ENCODE measurements at regions of chr7 and their contacts with region 1.

Region 1: GRCh38 chr7:154853744-154854129 is 149.2 kb downstream of the PAXIP1 start:
- DNase-seq: no peak
- ATAC-seq: no peak
- H3K4me3 ChIP-seq: no peak overlapping the region
- H3K27ac ChIP-seq: no peak overlapping the region
- H3K4me1 ChIP-seq: no peaks in the 10 kb centered on the region
- H3K27me3 ChIP-seq: no peaks in the 10 kb centered on the region
- CTCF ChIP-seq: no peak

Region 2: DNA sequence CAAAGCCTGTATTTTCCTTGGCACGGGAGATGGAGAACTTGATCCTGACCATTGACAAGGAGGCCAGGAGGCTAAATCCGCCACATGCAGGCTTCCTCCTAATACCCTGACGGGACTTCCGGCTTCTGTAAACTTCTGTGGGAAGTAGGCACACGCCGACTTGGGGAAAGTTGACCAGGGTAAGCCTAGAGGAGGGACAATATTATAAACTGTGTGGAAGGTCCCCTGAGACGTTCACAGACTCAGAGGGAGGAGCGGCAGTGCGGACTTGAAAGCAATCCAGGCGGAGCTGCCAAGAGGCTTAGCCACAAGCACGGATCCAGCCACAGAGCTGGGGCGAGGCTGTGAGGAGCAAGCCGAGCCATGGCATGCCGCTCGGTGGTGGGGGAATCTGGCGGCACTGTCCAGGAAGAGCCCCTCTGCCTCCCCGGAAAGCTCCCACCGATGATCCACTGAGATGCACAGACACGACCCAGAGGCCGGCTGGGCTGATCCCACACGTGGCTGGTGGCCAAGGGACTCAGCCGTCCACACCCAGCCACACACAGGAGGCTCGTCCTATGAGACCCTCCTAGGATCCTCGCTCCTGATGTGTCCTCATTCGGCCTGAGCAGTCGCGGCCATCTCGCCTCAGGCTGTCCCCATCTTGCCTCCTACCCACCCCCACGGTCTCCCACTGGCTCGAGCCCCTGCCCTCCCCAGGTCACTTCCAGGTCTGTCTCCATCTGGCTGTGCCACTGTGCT is 403.9 kb after region 1 on chr7:
- intact Hi-C with region 1: no loop called
- DNase-seq: peak; percentile 83 to 91
- ATAC-seq: peak; percentile 85 to 93 (median 88)
- H3K4me3 ChIP-seq: peak overlapping the region; percentile 47
- H3K27ac ChIP-seq: peak overlapping the region; percentile 91
- H3K4me1 ChIP-seq: peaks cover 21% of the 10 kb centered on the region
- H3K27me3 ChIP-seq: no peaks in the 10 kb centered on the region
- CTCF ChIP-seq: no peak

Region 3: DNA sequence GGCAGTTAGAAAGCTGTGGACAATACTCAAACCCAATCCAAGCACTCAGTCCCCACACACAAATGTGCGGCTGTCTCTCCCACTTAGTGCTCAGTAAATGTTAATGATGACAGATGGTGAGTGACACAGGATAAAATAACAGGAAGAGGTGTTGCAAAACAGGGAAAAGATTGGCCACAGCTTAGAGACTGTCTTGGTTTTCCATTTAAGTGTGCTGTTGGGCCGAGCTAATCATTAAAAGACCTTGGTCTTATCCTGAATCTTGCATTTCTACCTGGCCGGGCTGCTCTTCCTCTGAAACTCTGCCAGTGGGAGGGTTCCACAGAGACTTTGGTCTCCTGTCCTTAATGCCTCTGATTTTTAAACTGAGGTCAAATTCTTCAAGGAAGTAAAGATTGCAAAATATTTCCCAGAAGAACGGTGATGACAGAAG is 1673.7 kb after region 1 on chr7:
- intact Hi-C with region 1: loop called in 1 of 2 experiments (anchors 5 kb)
- DNase-seq: no peak
- ATAC-seq: no peak
- H3K4me3 ChIP-seq: no peak overlapping the region
- H3K27ac ChIP-seq: no peak overlapping the region
- H3K4me1 ChIP-seq: no peaks in the 10 kb centered on the region
- H3K27me3 ChIP-seq: no peaks in the 10 kb centered on the region
- CTCF ChIP-seq: no peak

Measured in psoas muscle (tissue), 8 donors.